PC-9 (cell line): ENCODE measurements at regions of chr9 and their contacts with region 1.

Region 1: DNA sequence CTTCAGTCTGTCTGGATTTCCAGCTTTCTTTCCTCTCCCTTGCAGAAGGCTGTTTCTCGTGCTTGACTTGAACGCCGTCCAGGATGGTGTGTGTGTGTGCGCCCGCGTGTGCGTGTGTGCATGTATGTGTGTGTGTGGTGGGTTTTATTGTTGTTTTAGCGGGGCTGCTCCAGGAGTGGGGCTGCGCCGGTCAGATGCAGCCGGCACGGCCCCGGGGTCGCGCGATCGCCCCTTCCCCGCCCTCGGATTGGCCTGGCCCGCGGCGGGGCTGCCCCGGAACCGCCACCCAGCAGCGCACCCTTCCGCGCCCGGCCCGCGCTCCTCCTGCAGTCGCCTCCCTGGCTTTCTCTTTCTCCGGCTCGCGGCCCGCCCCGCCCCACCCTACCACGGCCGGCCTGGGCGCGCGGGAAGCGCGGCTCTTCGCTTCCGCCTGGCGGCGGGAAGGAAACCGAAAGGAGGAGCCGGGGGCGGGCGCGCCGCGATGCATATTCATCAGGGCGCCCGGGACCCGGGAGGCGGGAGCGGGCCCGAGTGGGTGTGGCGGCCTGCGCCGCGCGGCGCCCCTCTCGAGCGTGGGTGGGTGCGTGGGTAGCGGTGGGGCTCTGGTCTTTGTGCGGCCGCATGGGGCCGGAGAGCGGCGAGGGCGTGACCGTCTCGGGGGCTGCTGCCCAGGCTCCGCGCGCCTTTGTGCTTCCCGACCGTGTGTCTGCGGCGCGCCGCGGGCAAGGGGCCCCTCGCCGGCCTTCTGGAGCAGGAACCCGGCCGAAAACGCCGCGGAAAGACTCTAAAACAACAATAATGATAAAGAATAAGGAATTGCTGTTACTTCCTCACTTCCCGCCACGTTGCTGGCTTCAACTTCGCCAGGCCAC is 8.5 kb upstream of the NFIB start:
- DNase-seq: peak; percentile 72 to 85
- H3K4me3 ChIP-seq: peak overlapping the region; percentile 73
- H3K27ac ChIP-seq: peak overlapping the region; percentile 92
- H3K4me1 ChIP-seq: peaks cover 59% of the 10 kb centered on the region
- H3K27me3 ChIP-seq: no peaks in the 10 kb centered on the region
- CTCF ChIP-seq: no peak; the same call in 1 of the 2 replicates

Region 2: GRCh38 chr9:14372437-14373335 is 50.2 kb after region 1 on chr9:
- CTCF ChIA-PET with region 1: no interaction called
- POLR2A ChIA-PET with region 1: interaction called, 12 read pairs
- intact Hi-C with region 1: no loop called
- DNase-seq: peak; percentile 46 to 67
- H3K4me3 ChIP-seq: no peak overlapping the region
- H3K27ac ChIP-seq: no peak overlapping the region
- H3K4me1 ChIP-seq: peaks cover 21% of the 10 kb centered on the region
- H3K27me3 ChIP-seq: no peaks in the 10 kb centered on the region
- CTCF ChIP-seq: no peak

Region 3: GRCh38 chr9:14661421-14662059 is 339.1 kb after region 1 on chr9:
- CTCF ChIA-PET with region 1: no interaction called
- POLR2A ChIA-PET with region 1: no interaction called
- intact Hi-C with region 1: no loop called
- DNase-seq: no peak
- H3K4me3 ChIP-seq: no peak overlapping the region
- H3K27ac ChIP-seq: no peak overlapping the region
- H3K4me1 ChIP-seq: no peaks in the 10 kb centered on the region
- H3K27me3 ChIP-seq: no peaks in the 10 kb centered on the region
- CTCF ChIP-seq: peak; percentile 55; the same call in 1 of the 2 replicates